Posterior vena cava (tissue), 2 donors: ENCODE measurements at regions of chr12 and their contacts with region 1.

Region 1: GRCh38 chr12:95117178-95117599 is 43.8 kb upstream of the NR2C1 start:
- DNase-seq: no peak

Region 2: DNA sequence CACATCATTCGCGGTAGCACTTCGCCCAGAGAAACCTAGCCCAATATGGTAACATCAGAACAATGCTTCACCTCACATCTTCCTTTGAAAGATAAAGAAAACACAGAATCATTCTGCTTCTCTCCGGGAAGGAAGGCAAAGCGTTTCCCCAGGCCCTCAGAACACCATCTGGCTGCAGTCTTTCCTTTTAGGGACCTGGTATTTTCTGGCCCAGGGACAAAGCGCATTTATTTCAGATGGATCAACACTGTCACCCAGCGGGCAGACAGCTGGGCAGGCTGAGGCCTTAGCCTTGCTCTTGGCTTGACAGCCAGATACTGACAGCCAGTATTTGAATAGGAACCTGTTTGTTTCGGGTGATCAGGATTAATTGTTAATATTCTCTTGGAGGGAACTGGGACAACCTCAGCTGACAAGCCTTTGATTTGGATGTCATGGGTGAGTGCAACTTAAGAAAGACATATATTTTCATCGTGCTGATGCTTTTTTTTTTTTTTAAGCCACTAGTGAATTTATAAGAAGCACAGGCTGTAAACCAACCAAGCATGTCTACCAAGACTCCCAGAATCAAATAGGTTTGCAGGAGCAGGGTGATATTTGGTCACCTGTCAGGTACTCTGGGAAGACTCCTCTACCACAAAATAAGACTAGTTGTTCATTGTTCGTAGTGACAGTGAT is 219.3 kb after region 1 on chr12:
- intact Hi-C with region 1: loop called in 1 of 2 experiments (anchors 5 kb)
- DNase-seq: no peak

Region 3: GRCh38 chr12:95532851-95533250 is 415.7 kb after region 1 on chr12:
- intact Hi-C with region 1: loop called (anchors 10 kb)
- DNase-seq: no peak